ENCODE measurements at regions of chr6 and their contacts with region 1.

Region 1: DNA sequence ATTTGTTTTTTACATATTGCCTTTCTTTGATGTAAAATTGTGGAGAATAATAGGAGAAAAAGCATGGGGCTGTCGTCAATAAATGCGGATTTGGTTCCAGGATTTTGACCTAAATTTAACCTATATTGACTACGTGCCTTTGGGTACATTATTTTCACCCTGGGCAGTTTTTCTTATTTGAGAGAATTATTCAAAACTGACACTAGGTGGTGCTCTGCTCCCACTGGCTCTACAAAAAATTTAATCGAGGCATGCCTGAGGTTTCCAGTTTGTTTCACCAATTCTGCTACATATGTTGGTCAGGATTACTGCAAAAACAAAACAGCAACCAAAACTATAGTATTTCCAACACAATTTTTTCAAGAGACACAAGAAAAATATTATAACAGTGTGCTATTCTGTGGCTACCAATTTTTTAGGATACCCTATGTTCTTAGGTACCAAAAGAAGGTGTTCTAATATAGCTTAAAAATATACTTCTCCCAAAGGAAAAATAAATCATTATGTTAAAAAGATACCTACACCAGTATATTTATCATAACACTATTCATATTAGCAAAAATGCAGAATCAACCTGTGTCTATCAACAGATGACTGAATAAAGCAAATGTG is 48.6 kb upstream of the FABP7 start:
- DNase-seq: peak; percentile 81
- H3K4me3 ChIP-seq: no peak overlapping the region
- H3K27ac ChIP-seq: no peak overlapping the region
- H3K4me1 ChIP-seq: peaks cover 39% of the 10 kb centered on the region
- H3K27me3 ChIP-seq: no peaks in the 10 kb centered on the region
- CTCF ChIP-seq: peak; percentile 82

Region 2: DNA sequence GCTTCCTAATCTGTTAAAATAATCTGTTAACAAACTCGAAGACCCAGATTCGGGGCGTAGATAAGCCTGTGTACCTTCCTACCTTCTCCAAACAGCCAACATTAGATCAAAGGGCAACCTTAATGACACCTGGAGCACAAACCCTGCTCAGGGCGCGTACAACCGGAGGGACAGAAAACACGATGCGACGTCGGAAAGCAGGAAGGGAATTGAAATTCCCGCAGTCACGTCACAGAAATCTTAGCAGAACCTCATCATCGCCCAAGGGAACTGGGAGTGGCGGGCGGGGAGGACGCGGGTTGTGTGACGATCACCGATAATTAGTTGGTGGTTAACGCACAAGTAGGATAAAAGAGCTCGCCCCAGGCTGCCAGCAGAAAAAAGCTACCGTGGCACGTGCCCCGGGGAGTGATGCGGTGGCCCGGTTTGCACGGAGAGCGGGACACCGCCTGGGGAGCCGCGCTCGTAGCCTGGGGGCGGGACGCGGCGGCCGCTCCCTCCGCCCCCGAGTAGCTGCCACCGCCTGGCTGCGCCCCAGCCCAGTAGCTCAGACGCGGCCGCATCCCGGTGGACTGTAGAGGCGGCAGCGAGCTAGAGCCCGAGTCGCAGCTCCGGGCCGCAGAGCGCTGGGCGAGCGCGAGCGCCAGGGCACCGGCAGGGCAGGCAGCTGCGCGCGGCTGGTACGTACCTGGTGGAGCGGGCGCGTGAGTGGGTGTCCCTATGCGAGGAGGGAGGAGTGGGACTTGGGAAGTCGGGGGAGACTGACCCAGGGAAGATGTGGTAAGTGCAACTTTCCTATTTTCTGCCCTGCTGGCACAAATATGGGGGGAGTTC is 120.8 kb before region 1 on chr6 and contains the start of gene PKIB:
- CTCF ChIA-PET with region 1: no interaction called
- POLR2A ChIA-PET with region 1: no interaction called
- intact Hi-C with region 1: loop called (anchors 5 kb)
- DNase-seq: peak; percentile 91
- H3K4me3 ChIP-seq: peak within 1 kb of the TSS; percentile 68
- H3K27ac ChIP-seq: peak within 1 kb of the TSS; percentile 3
- H3K4me1 ChIP-seq: no peaks in the 10 kb centered on the region
- H3K27me3 ChIP-seq: no peaks in the 10 kb centered on the region
- CTCF ChIP-seq: peak; percentile 53
- total RNA-seq, gene PKIB: 10.4 and 11.5 TPM in 2 replicates

Region 3: DNA sequence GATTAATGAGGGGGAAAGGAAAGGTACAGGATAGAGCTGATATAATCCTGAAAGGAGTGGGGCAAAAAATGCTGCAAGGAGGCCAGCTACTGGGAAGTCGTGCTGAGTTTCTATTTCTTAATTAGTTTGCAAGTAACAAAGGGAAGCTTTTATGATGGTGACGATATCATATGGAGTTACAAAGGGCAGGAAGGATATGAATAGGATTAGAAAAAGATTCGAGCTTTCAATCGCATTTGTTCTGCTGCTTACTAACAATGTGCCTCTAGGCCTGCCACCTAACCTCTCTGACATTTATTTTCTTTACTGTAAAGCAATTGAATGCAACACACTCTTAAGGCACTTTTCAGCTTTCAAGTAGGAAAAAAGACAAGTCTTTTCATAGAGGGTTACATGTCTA is 484.3 kb after region 1 on chr6:
- CTCF ChIA-PET with region 1: no interaction called
- POLR2A ChIA-PET with region 1: no interaction called
- intact Hi-C with region 1: loop called (anchors 2 kb)
- DNase-seq: peak; percentile 98
- H3K4me3 ChIP-seq: no peak overlapping the region
- H3K27ac ChIP-seq: peak overlapping the region; percentile 99
- H3K4me1 ChIP-seq: peaks cover 67% of the 10 kb centered on the region
- H3K27me3 ChIP-seq: no peaks in the 10 kb centered on the region
- CTCF ChIP-seq: no peak

Region 4: DNA sequence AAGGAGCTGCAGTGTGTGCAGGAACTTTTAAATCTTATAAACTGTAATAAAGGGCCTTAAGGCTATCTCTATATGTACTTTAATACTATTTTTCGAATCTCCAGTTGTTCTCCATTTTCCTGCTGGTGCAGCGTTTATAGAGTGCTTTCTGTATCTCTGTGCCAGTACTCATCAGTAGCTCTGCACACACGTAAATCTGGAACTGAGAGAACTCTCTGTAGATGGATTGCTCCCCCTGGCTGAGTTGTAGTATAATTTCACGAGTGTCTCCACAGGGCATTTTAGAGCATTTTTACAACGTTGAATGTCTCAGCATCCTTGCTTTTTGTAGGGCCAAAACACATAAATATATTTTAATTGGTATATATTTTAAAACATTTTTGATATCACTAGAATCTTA is 649.4 kb after region 1 on chr6:
- CTCF ChIA-PET with region 1: interaction called, 4 read pairs
- POLR2A ChIA-PET with region 1: no interaction called
- intact Hi-C with region 1: loop called (anchors 2 kb)
- DNase-seq: peak; percentile 94
- H3K4me3 ChIP-seq: peak overlapping the region; percentile 20
- H3K27ac ChIP-seq: peak overlapping the region; percentile 67
- H3K4me1 ChIP-seq: peaks cover 40% of the 10 kb centered on the region
- H3K27me3 ChIP-seq: no peaks in the 10 kb centered on the region
- CTCF ChIP-seq: peak; percentile 76

Measured in A673 (cell line).